Left colon (tissue), 2 donors: ENCODE measurements at regions of chr12 and their contacts with region 1.

Region 1: DNA sequence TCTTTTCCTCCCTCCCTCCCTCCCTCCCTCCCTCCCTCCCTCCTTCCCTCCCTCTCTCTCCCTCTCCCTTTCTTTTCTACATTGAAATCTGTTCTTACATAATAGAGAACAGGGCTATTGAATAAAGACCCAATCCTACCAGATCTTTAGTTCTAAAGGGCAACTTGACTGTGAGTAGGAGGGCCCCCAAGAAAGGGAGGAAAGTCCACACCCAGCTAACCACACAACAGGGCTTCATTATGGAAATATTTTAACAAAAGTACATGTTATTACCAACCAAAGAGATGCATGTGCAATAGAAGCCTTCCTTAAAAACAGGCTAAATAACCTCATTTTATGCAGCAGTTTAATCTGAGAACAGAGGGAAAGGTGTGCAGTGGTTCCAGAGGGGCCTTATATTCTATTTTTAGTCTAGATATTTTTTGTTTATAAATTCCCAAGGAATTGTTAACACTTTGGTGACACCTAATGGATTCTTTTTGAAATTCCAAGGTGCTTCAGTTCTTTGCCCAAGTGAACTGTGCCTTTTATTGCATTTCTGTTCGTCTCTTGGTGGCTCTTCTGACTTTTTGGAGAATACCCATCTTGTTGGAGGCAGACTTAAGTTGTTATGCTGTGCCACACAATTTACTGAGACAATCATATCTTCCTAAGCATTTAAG is 63.0 kb downstream of the GNS start:
- DNase-seq: no peak
- ATAC-seq: peak; percentile 38

Region 2: DNA sequence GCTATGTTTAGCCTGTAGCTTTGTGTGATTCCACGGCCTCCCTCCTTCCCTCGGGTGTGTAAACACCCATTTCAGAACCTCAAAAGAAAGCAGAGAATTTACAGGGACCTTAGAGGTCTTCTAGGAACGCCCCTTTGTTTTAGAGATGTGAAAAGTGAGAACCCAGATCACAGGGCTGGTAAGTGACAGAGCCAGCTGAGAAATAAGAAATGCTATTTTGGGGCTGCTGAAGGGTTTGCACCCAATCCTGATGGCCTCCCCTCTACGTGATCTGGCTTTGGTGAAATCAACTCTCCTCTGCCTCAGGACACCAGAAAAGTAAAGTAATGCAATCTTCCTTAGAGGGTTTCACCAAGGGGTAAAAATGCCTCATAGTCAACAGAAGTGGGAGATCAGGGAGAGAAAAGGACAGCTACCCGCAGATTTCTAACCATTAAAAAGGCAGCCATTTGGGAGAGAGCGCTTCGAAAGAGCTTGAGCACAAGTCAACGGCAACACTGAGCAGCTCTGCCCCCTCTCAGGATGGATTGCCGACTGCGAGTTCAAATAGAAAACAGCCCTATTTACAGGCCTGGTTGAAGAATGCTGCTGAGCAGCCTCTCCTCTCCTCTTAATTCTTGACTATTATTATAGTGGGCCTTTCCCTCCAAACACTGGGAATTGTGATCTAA is 164.4 kb before region 1 on chr12:
- intact Hi-C with region 1: loop called in 1 of 2 experiments (anchors 10 kb)
- DNase-seq: no peak
- ATAC-seq: no peak

Region 3: DNA sequence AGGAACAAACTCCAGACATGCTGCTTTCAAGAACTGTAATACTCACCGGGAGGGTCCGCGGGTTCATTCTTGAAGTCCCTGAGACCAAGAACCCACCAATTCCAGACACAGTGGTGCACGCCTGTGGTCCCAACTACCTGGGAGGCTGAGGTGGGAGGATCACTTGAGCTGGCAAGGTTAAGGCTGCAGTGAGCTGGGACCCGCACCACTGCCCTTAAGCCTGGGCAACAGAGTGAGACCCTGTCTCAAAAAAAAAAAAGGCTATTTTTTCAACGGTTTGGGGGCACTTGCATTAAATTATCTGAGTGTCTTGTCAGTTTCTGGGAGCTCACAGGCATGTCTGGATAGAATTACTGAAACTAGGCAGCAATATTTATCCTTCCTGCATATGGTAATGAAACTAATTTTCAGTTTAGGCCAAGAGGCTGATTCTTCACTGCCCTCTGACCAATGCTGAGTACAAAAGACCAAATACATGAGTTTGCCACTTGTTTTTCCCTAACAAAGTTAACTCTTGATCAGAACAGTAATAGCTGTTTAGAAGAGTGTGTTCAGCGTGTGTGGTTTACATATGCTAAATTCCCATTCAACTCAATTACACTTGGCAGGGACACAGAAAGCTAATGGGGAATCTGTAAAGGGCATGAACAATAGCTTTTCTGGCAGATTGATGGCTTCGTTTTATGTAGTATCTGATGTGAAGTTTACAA is 151.7 kb before region 1 on chr12:
- intact Hi-C with region 1: loop called (anchors 1 to 10 kb)
- DNase-seq: no peak
- ATAC-seq: no peak

Region 4: GRCh38 chr12:64551698-64552097 is 144.5 kb before region 1 on chr12:
- intact Hi-C with region 1: loop called (anchors 1 to 5 kb)
- DNase-seq: no peak
- ATAC-seq: no peak

Region 5: DNA sequence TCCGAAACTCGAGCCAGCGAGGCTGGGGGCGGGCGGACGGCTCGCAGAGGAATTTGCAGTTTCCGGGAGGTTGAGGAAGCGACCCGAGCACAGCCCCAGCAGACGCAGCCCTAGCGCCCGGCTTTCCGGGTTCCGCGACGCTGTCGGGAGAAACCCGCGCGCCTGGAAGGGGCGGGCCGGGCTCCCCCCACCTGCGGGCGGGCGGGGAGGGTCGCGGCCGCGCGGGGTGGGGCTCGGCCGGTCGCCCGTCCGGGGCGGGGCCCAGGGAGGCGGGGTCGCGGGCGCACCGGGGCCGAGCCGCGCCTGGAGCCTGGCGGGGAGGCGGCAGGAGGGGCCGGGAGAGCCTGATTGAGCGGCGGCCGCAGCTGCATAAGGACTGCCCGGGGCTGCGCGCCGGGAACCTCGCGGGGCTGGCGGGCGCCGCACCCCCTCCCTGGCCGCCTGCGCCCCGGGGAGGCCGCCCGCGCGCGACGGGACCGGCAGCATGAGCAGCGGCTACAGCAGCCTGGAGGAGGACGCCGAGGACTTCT is 86.0 kb before region 1 on chr12 and contains the start of gene RASSF3:
- intact Hi-C with region 1: loop called in 1 of 2 experiments (anchors 10 kb)
- DNase-seq: peak; percentile 79 to 83
- ATAC-seq: peak; percentile 67
- total RNA-seq, gene RASSF3: 88.4 to 104 TPM

Region 6: GRCh38 chr12:64733857-64734256 is 37.6 kb after region 1 on chr12:
- intact Hi-C with region 1: no loop called
- DNase-seq: no peak
- ATAC-seq: no peak

Region 7: GRCh38 chr12:64836862-64837261 is 140.7 kb after region 1 on chr12:
- intact Hi-C with region 1: no loop called
- DNase-seq: no peak
- ATAC-seq: no peak